ENCODE measurements at regions of chr9 and their contacts with region 1.

Region 1: DNA sequence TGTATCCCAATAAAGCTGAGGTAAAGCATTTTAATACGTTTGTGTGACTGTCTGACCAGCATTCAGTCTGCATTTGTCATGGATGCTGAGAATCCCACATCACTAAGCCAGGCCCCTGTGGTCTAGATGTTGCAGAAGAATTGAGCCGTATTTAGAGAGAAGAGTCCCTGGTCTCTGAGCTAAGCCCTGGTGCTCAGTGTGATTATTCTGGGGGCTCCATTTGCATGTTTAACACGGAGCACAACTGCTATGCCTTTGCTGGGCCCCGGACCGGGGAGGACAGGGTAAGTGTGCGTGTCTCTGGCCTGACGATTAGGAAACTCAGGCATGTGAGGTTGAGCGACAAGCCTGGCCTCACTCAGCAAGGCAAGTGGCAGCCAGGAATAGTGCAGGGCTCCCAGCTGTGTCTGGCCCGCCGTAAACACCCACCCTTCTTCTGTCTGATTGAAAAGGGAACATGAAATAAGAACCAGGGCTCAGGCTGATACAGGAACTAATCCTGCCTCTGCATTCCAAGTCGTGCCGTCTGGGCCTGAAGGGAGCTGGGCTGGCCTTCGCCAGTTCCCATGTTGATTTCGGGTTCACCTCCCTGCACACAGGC is 22.3 kb downstream of the FAM78A start:
- DNase-seq: no peak
- H3K4me3 Mint-ChIP-seq: peak overlapping the region; percentile 17
- H3K27ac Mint-ChIP-seq: peak overlapping the region; percentile 7
- H3K4me1 Mint-ChIP-seq: peaks cover 28% of the 10 kb centered on the region
- H3K27me3 Mint-ChIP-seq: no peaks in the 10 kb centered on the region

Region 2: GRCh38 chr9:131237931-131238401 is 16.0 kb before region 1 on chr9:
- intact Hi-C with region 1: loop called (anchors 1 kb)
- DNase-seq: peak; percentile 82
- H3K4me3 Mint-ChIP-seq: peak overlapping the region; percentile 34
- H3K27ac Mint-ChIP-seq: peak overlapping the region; percentile 93
- H3K4me1 Mint-ChIP-seq: peaks cover 27% of the 10 kb centered on the region
- H3K27me3 Mint-ChIP-seq: no peaks in the 10 kb centered on the region

Region 3: GRCh38 chr9:131270171-131271015 is 16.4 kb after region 1 on chr9:
- intact Hi-C with region 1: loop called (anchors 1 kb)
- DNase-seq: peak; percentile 45
- H3K4me3 Mint-ChIP-seq: peak overlapping the region; percentile 100
- H3K27ac Mint-ChIP-seq: peak overlapping the region; percentile 97
- H3K4me1 Mint-ChIP-seq: peaks cover 58% of the 10 kb centered on the region
- H3K27me3 Mint-ChIP-seq: no peaks in the 10 kb centered on the region

Region 4: DNA sequence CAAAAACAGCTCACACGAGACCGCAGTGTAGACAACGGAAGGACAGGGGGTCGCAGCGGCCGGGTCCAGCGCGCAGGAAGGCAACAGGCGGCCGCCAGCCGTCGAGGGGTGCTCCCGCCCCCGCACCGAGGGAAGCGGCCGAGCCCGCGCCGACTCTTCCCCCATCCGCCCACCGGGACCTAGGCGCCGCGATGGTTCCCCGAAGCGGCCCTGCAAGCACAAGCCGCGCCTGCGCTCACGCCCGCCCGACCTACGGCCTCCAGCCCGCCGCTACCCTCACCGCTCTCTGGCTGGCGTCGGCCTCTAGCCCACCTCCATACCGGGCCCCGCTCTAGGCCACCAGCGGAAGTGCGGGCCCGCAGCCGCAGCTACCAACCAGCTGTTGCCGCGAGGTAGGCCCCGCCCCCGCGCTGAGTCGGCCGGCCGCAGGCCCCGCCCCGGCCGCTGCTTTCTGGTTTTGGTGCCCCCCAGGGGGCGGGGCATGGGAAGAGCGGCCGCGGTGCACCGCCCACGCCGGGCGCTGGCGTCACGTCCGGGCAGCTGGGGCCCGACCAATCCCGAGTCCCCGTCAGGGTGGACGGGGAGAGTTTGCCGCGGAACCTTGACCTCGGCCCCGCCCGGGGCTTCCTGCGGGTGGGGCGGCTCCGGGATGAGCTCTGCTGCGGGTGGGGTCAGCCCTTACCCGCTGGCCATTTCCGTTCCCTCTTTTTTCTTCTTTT is 1100.8 kb after region 1 on chr9 and contains the start of gene SETX:
- intact Hi-C with region 1: loop called (anchors 10 kb)
- DNase-seq: peak; percentile 89
- H3K4me3 Mint-ChIP-seq: peak within 1 kb of the TSS; percentile 91
- H3K27ac Mint-ChIP-seq: peak within 1 kb of the TSS; percentile 93
- H3K4me1 Mint-ChIP-seq: peaks cover 37% of the 10 kb centered on the region
- H3K27me3 Mint-ChIP-seq: no peaks in the 10 kb centered on the region
- total RNA-seq, gene SETX: 49.8 and 51.0 TPM in 2 replicates